Heart right ventricle (tissue), 16 donors: ENCODE measurements at regions of chr4 and their contacts with region 1.

Region 1: DNA sequence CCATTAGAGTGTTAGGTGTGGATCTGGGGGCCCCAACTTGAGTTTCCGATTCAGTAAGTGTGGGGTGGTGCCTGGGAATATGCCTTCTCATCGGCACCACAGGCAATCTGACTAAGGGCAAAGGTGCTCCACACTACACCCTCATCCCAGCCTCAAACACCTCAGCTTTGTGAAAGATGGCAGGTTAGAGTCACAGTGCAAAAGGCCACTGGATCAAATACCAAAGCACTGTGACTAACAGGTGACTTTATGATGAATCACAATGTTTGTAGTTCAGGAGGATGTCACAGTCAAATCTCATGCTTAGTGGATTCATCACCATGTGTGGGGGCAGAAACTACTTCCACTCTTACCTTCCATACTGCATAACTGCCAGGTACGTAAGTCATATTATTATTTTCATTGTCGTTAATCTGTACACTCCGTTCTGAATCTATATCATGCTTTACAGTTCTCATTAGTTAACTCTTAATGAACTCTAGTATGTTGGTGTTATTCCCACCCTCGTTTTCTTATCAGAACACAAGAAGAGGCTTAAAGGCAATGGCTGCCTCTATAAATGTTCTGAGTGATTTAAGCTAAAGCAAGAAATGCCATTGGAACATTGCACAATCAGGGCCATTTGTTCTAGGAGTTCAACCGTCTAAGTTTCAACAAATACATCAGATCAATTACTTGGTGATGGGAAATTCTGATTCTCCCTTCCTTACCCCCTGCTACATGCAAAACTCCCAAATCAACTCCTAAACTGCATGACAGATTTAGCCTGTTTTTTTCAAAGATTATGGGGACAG is 50.2 kb downstream of the PRKG2 start:
- DNase-seq: no peak
- ATAC-seq: no peak
- H3K4me3 ChIP-seq: no peak overlapping the region
- H3K27ac ChIP-seq: no peak overlapping the region
- H3K4me1 ChIP-seq: no peaks in the 10 kb centered on the region
- H3K27me3 ChIP-seq: no peaks in the 10 kb centered on the region
- CTCF ChIP-seq: no peak

Region 2: DNA sequence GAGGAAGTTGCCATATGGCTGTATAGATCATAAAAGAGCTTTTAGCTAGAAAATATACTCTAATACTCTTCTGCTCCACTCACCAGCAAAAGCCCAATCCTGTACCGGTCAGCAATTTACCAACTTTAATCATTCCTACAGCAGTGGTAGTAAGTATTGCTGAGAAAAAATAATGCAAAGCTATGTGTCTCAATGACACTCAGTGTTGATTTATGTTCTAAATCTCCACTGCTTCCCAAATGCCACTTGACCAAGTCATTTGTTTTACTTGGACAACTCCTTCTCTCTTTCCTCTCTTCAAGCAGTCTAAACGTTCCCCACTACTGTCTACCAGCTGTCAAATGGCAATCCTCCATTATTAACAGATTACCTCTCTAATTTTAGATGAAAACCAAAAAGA is 1555.0 kb before region 1 on chr4:
- intact Hi-C with region 1: no loop called
- DNase-seq: no peak
- ATAC-seq: no peak
- H3K4me3 ChIP-seq: no peak overlapping the region
- H3K27ac ChIP-seq: no peak overlapping the region
- H3K4me1 ChIP-seq: peaks cover 0 to under 1% (median 0%) of the 10 kb centered on the region in 9 donors
- H3K27me3 ChIP-seq: no peaks in the 10 kb centered on the region
- CTCF ChIP-seq: no peak

Region 3: DNA sequence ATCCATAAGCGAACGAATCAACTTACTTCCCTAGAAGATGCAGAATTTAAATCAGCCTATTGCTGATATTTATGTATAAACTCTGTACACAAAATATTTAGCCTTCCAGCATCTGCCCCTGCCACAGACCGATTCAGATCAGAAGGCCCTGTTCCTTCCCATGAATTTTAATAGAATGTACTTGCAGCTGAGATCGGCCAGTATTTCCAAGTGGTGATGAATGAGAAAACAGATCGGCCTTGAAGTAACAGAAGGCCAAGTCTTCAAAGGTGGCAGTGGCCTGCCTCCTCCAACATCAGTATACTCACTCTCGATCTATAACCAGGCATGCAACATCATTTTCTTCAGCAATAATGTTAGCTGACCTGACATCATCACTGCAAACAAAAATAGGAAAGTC is 16.2 kb before region 1 on chr4:
- intact Hi-C with region 1: loop called in 1 of 10 experiments (anchors 2 kb)
- DNase-seq: no peak
- ATAC-seq: no peak
- H3K4me3 ChIP-seq: no peak overlapping the region
- H3K27ac ChIP-seq: no peak overlapping the region
- H3K4me1 ChIP-seq: no peaks in the 10 kb centered on the region
- H3K27me3 ChIP-seq: no peaks in the 10 kb centered on the region
- CTCF ChIP-seq: no peak